CD8-positive, alpha-beta memory T cell (primary cell): ENCODE measurements at regions of chr9 and their contacts with region 1.

Region 1: GRCh38 chr9:133375724-133376654 is at the starts of genes STKLD1 and SURF4:
- DNase-seq: peak; percentile 91 to 94 (median 92)
- H3K4me3 ChIP-seq: peak within 1 kb of the TSS; percentile 84
- H3K4me3 Mint-ChIP-seq: peak within 1 kb of the TSS; percentile 91 to 98 (median 95)
- H3K27ac ChIP-seq: peak within 1 kb of the TSS; percentile 87
- H3K27ac Mint-ChIP-seq: peak within 1 kb of the TSS; percentile 94 to 99 (median 98)
- H3K4me1 ChIP-seq: peaks cover 37% of the 10 kb centered on the region
- H3K4me1 Mint-ChIP-seq: peaks cover 37 to 42% (median 42%) of the 10 kb centered on the region in 3 donors
- H3K27me3 ChIP-seq: no peaks in the 10 kb centered on the region
- H3K27me3 Mint-ChIP-seq: no peaks in the 10 kb centered on the region
- total RNA-seq, gene STKLD1: 0.24 to 0.91 TPM
- total RNA-seq, gene SURF4: 239 to 250 TPM

Region 2: DNA sequence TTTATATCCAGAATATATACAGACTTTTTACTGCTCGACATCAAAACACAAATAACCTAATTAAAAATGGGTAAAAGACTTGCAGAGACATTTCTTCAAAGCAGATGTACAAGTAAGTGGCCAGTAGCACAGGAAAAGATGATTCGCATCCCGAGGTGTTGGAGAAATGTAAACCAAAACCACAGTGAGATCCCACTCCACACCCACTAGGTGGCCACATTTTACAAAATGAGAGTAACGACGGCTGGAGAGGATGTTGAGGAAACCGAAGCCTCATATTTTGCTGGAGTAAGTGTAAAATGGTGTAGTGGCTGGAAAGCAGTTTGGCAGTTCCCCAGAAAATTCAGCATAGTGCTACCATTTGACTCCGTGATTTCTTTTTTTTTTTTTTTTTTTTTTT is 191.0 kb before region 1 on chr9:
- CTCF ChIA-PET with region 1: interaction called, 13 read pairs
- POLR2A ChIA-PET with region 1: no interaction called
- DNase-seq: peak in 4 of 5 donors; percentile 13 to 55 (median 32)
- H3K4me3 ChIP-seq: no peak overlapping the region
- H3K4me3 Mint-ChIP-seq: peak overlapping the region in 1 of 7 donors; percentile 46
- H3K27ac ChIP-seq: no peak overlapping the region
- H3K27ac Mint-ChIP-seq: peak overlapping the region in 1 of 8 donors; percentile 9
- H3K4me1 ChIP-seq: peaks cover 10% of the 10 kb centered on the region
- H3K4me1 Mint-ChIP-seq: peaks cover 12 to 14% (median 13%) of the 10 kb centered on the region in 3 donors
- H3K27me3 ChIP-seq: peaks cover 19% of the 10 kb centered on the region
- H3K27me3 Mint-ChIP-seq: peaks cover 22 to 46% of the 10 kb centered on the region in 2 donors

Region 3: GRCh38 chr9:133323991-133324703 is 51.8 kb before region 1 on chr9:
- CTCF ChIA-PET with region 1: no interaction called
- POLR2A ChIA-PET with region 1: no interaction called
- DNase-seq: no peak
- H3K4me3 ChIP-seq: no peak overlapping the region
- H3K4me3 Mint-ChIP-seq: peak overlapping the region in 1 of 7 donors; percentile 43
- H3K27ac ChIP-seq: no peak overlapping the region
- H3K27ac Mint-ChIP-seq: no peak overlapping the region
- H3K4me1 ChIP-seq: no peaks in the 10 kb centered on the region
- H3K4me1 Mint-ChIP-seq: peaks cover 0 to 10% (median 4%) of the 10 kb centered on the region in 3 donors
- H3K27me3 ChIP-seq: no peaks in the 10 kb centered on the region
- H3K27me3 Mint-ChIP-seq: peaks cover 3% of the 10 kb centered on the region in 2 donors

Region 4: GRCh38 chr9:133335878-133336811 is 39.8 kb before region 1 on chr9 and contains the start of gene SURF6:
- CTCF ChIA-PET with region 1: interaction called, 7 read pairs
- POLR2A ChIA-PET with region 1: interaction called, 14 read pairs
- DNase-seq: peak; percentile 89 to 94 (median 93)
- H3K4me3 ChIP-seq: peak within 1 kb of the TSS; percentile 92
- H3K4me3 Mint-ChIP-seq: peak within 1 kb of the TSS; percentile 95 to 98 (median 96)
- H3K27ac ChIP-seq: peak within 1 kb of the TSS; percentile 72
- H3K27ac Mint-ChIP-seq: peak within 1 kb of the TSS; percentile 92 to 96 (median 94)
- H3K4me1 ChIP-seq: peaks cover 41% of the 10 kb centered on the region
- H3K4me1 Mint-ChIP-seq: peaks cover 36 to 53% (median 49%) of the 10 kb centered on the region in 3 donors
- H3K27me3 ChIP-seq: no peaks in the 10 kb centered on the region
- H3K27me3 Mint-ChIP-seq: no peaks in the 10 kb centered on the region
- total RNA-seq, gene SURF6: 30.9 to 32.0 TPM

Region 5: DNA sequence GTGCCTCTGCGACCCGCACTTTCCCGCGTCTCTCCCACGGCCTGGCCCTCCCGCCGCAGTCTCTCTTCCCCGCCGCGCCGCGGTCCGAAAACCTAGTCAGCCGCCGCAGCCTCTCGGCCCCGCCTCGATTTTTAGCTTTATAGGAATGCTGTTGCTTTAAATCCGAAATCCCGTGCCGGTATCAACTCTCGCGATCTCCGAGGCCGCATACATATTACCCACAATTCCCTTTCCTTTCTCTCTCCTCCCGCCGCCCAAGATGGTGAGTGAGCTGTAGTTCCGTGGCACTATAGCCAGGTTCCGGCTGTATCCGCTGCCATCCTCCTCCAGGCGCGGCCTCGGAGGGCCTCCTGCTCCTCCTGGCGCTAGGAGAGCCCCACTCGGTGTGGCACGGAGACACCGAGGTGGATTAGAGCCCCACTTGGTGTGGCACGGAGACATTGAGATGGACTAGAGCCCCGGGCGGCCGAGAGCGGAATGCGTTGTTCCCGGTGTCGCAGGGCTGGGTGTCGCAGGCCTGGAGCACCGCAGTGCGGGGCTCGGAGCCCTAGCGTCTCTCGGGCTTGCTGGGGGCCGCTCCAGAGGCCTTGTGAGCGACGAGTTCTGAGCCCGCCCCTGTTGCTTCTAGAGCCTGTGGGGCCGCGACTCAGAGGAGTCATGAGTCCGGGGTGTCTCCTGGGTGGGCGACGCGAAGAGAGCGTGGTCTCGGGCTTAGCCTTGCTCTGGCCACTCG is 27.8 kb before region 1 on chr9 and contains the starts of genes MED22 and RPL7A:
- CTCF ChIA-PET with region 1: interaction called, 84 read pairs
- POLR2A ChIA-PET with region 1: interaction called, 25 read pairs
- DNase-seq: peak; percentile 80 to 95 (median 90)
- H3K4me3 ChIP-seq: peak within 1 kb of the TSS; percentile 99
- H3K4me3 Mint-ChIP-seq: peak within 1 kb of the TSS; percentile 93 to 100 (median 99)
- H3K27ac ChIP-seq: peak within 1 kb of the TSS; percentile 92
- H3K27ac Mint-ChIP-seq: peak within 1 kb of the TSS; percentile 89 to 99 (median 98)
- H3K4me1 ChIP-seq: peaks cover 29% of the 10 kb centered on the region
- H3K4me1 Mint-ChIP-seq: peaks cover 29 to 47% (median 38%) of the 10 kb centered on the region in 3 donors
- H3K27me3 ChIP-seq: no peaks in the 10 kb centered on the region
- H3K27me3 Mint-ChIP-seq: peaks cover 0 to 3% of the 10 kb centered on the region in 2 donors
- total RNA-seq, gene MED22: 43.3 to 46.3 TPM
- total RNA-seq, gene RPL7A: 3,139 to 3,155 TPM

Region 6: GRCh38 chr9:133356391-133357091 is 19.4 kb before region 1 on chr9 and contains the starts of genes SURF1 and SURF2:
- CTCF ChIA-PET with region 1: interaction called, 84 read pairs
- POLR2A ChIA-PET with region 1: interaction called, 58 read pairs
- DNase-seq: peak; percentile 83 to 92 (median 87)
- H3K4me3 ChIP-seq: peak within 1 kb of the TSS; percentile 84
- H3K4me3 Mint-ChIP-seq: peak within 1 kb of the TSS; percentile 83 to 94 (median 87)
- H3K27ac ChIP-seq: peak within 1 kb of the TSS; percentile 78
- H3K27ac Mint-ChIP-seq: peak within 1 kb of the TSS; percentile 82 to 98 (median 92)
- H3K4me1 ChIP-seq: peaks cover 35% of the 10 kb centered on the region
- H3K4me1 Mint-ChIP-seq: peaks cover 25 to 46% (median 32%) of the 10 kb centered on the region in 3 donors
- H3K27me3 ChIP-seq: no peaks in the 10 kb centered on the region
- H3K27me3 Mint-ChIP-seq: peaks cover 0 to 3% of the 10 kb centered on the region in 2 donors
- total RNA-seq, gene SURF1: 35.9 to 37.8 TPM
- total RNA-seq, gene SURF2: 34.9 to 35.2 TPM

Region 7: GRCh38 chr9:133362359-133363044 is 13.5 kb before region 1 on chr9:
- CTCF ChIA-PET with region 1: interaction called, 84 read pairs
- POLR2A ChIA-PET with region 1: interaction called, 58 read pairs
- DNase-seq: no peak
- H3K4me3 ChIP-seq: no peak overlapping the region
- H3K4me3 Mint-ChIP-seq: peak overlapping the region in 1 of 7 donors; percentile 76
- H3K27ac ChIP-seq: no peak overlapping the region
- H3K27ac Mint-ChIP-seq: peak overlapping the region in 4 of 8 donors; percentile 12 to 87 (median 46)
- H3K4me1 ChIP-seq: peaks cover 20% of the 10 kb centered on the region
- H3K4me1 Mint-ChIP-seq: peaks cover 30 to 72% (median 33%) of the 10 kb centered on the region in 3 donors
- H3K27me3 ChIP-seq: no peaks in the 10 kb centered on the region
- H3K27me3 Mint-ChIP-seq: no peaks in the 10 kb centered on the region

Region 8: GRCh38 chr9:133390713-133391112 is 14.7 kb after region 1 on chr9:
- CTCF ChIA-PET with region 1: no interaction called
- POLR2A ChIA-PET with region 1: no interaction called
- DNase-seq: no peak
- H3K4me3 ChIP-seq: no peak overlapping the region
- H3K4me3 Mint-ChIP-seq: no peak overlapping the region
- H3K27ac ChIP-seq: no peak overlapping the region
- H3K27ac Mint-ChIP-seq: no peak overlapping the region
- H3K4me1 ChIP-seq: no peaks in the 10 kb centered on the region
- H3K4me1 Mint-ChIP-seq: no peaks in the 10 kb centered on the region
- H3K27me3 ChIP-seq: peaks cover 3% of the 10 kb centered on the region
- H3K27me3 Mint-ChIP-seq: peaks cover 8% of the 10 kb centered on the region in 2 donors